ENCODE measurements at regions of chr12 and their contacts with region 1.

Region 1: GRCh38 chr12:80186727-80187217 is 87.4 kb downstream of the OTOGL start:
- DNase-seq: peak; percentile 82
- H3K4me3 ChIP-seq: no peak overlapping the region
- H3K27ac ChIP-seq: peak overlapping the region; percentile 80 to 86 (median 84)
- H3K4me1 ChIP-seq: peaks cover 0 to 42% (median 16%) of the 10 kb centered on the region in 4 donors
- H3K27me3 ChIP-seq: no peaks in the 10 kb centered on the region
- CTCF ChIP-seq: peak; percentile 67 to 74 (median 70)
- EP300 ChIP-seq: peak in 3 of 4 donors; percentile 53 to 86 (median 75)
- POLR2A ChIP-seq: no peak

Region 2: DNA sequence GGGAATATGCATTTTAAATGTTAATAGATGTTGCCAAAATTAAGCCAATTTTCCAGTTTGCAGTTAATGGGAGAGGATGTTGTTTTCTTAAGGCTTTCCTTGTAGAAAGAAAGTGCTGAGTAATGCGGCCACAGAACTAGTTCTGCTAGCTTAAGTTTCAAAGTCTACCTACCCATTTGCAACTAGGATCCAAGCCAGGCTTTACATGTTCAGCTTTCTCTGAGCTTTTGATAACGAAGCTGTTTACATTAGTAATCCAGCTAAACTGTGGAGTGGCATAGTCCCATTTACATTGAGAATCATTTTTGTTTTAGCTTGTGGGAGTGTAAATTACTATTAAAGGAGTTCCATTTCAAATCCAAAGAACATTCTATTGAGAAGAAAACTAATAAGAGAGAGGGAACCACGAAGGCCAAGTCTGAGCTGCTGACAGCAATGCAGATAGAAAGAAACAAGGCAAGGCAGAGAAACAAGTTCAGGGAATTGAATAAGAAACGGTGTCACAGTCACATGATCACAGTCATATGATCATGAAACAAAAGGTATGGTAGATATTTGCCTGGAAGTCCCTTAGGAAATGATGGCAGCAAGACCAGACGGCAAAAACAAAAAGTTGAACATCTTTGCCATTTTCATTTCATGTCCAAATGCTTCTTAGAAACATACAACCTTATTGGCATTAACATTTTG is 770.9 kb before region 1 on chr12:
- intact Hi-C with region 1: loop called (anchors 10 kb)
- DNase-seq: no peak
- H3K4me3 ChIP-seq: no peak overlapping the region
- H3K27ac ChIP-seq: no peak overlapping the region
- H3K4me1 ChIP-seq: peaks cover 0 to 34% (median 20%) of the 10 kb centered on the region in 4 donors
- H3K27me3 ChIP-seq: no peaks in the 10 kb centered on the region
- CTCF ChIP-seq: no peak
- EP300 ChIP-seq: no peak
- POLR2A ChIP-seq: no peak

Region 3: DNA sequence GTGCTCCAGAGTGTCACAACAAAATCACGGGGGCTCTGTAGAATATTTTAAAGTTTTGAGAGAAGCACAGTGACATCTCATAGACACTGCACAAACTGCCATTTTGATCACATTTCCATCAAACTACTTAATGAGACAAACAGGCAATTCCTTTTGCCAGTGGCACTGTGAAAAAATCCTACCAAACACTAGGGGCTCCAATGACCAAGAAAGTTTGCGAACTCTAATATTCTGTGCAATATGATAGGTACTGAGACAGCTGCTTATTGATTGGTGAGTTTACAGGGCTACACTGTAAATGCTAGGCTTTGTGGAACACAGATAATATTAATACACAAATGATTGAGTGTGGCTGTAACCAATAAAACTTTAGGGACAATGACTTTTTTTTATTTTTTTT is 375.4 kb before region 1 on chr12:
- intact Hi-C with region 1: loop called (anchors 10 kb)
- DNase-seq: no peak
- H3K4me3 ChIP-seq: no peak overlapping the region
- H3K27ac ChIP-seq: no peak overlapping the region
- H3K4me1 ChIP-seq: peaks cover 0 to 25% (median 6%) of the 10 kb centered on the region in 4 donors
- H3K27me3 ChIP-seq: no peaks in the 10 kb centered on the region
- CTCF ChIP-seq: no peak
- EP300 ChIP-seq: no peak
- POLR2A ChIP-seq: no peak

Region 4: DNA sequence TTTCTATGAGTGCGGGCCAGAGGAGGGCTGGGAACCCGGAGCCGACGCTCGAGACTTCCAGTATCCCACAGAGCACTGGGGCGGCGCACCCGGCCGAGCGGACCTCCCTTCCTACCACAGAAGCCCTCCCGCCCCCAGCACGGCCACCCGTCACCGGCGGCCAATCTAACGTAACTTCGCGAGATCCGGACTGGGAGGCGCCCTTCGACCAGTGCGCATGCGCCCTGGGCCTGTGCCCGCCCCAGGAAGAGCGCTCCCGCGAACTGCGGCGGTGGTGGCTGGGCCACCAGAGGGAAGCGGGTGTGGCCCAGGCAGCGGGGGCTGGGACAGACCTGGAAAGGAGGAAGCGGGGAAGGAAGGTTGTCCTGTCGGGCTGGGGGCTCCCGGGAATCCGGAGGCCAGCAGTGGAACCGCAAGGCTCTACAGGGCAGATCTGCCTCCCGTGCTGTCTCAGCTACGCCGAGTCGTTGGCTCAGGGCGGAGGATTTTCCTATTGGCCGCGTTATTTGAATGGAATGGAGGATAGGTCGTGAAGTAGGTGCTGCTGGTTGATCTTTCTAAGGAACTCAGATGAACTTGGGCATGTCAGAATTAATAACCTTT is 251.7 kb before region 1 on chr12 and contains the start of gene PPP1R12A:
- intact Hi-C with region 1: loop called (anchors 1 kb)
- DNase-seq: peak; percentile 98
- H3K4me3 ChIP-seq: peak within 1 kb of the TSS; percentile 81 to 96 (median 92)
- H3K27ac ChIP-seq: peak within 1 kb of the TSS; percentile 98 to 99 (median 99)
- H3K4me1 ChIP-seq: peaks cover 0 to 44% (median 26%) of the 10 kb centered on the region in 4 donors
- H3K27me3 ChIP-seq: no peaks in the 10 kb centered on the region
- CTCF ChIP-seq: peak in 2 of 4 experiments; percentile 22 to 31
- EP300 ChIP-seq: no peak
- POLR2A ChIP-seq: peak; percentile 99
- total RNA-seq, gene PPP1R12A: 326 to 528 (median 393) TPM

Region 5: GRCh38 chr12:80053048-80053790 is 133.6 kb before region 1 on chr12:
- intact Hi-C with region 1: loop called (anchors 5 kb)
- DNase-seq: peak; percentile 93
- H3K4me3 ChIP-seq: no peak overlapping the region
- H3K27ac ChIP-seq: peak overlapping the region; percentile 65 to 84 (median 80)
- H3K4me1 ChIP-seq: peaks cover 0 to 37% (median 23%) of the 10 kb centered on the region in 4 donors
- H3K27me3 ChIP-seq: no peaks in the 10 kb centered on the region
- CTCF ChIP-seq: no peak
- EP300 ChIP-seq: peak in 1 of 4 donors; percentile 27
- POLR2A ChIP-seq: no peak

Region 6: DNA sequence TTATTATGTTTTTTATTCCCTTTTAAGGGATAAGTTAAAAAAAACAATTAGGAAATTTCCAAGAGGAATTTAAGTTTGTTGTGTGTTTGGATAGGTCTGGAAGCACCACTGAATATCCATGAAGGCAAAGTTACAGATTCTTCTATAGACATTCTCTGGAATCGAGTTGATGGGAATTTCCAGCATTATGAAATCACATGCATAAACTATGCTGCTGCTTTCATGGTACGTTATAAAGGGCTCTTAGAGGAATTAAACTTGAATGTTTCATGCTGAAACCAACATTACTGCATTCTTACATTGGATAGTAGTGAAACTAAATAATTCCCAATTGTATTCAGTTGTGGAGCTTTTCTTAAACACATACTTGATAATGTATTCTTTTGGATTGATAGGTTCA is 235.8 kb after region 1 on chr12:
- intact Hi-C with region 1: no loop called
- DNase-seq: no peak
- H3K4me3 ChIP-seq: no peak overlapping the region
- H3K27ac ChIP-seq: no peak overlapping the region
- H3K4me1 ChIP-seq: peaks cover 0 to 15% (median 9%) of the 10 kb centered on the region in 4 donors
- H3K27me3 ChIP-seq: no peaks in the 10 kb centered on the region
- CTCF ChIP-seq: no peak
- EP300 ChIP-seq: no peak
- POLR2A ChIP-seq: no peak